Mucosa of descending colon (tissue), 3 donors: ENCODE measurements at regions of chr1 and their contacts with region 1.

Region 1: GRCh38 chr1:117121776-117122697 is 488 bp upstream of the TRIM45 start:
- DNase-seq: peak; percentile 95 to 98 (median 97)
- ATAC-seq: peak; percentile 97
- H3K4me3 ChIP-seq: peak overlapping the region; percentile 36
- H3K4me1 ChIP-seq: no peaks in the 10 kb centered on the region
- CTCF ChIP-seq: peak; percentile 79

Region 2: DNA sequence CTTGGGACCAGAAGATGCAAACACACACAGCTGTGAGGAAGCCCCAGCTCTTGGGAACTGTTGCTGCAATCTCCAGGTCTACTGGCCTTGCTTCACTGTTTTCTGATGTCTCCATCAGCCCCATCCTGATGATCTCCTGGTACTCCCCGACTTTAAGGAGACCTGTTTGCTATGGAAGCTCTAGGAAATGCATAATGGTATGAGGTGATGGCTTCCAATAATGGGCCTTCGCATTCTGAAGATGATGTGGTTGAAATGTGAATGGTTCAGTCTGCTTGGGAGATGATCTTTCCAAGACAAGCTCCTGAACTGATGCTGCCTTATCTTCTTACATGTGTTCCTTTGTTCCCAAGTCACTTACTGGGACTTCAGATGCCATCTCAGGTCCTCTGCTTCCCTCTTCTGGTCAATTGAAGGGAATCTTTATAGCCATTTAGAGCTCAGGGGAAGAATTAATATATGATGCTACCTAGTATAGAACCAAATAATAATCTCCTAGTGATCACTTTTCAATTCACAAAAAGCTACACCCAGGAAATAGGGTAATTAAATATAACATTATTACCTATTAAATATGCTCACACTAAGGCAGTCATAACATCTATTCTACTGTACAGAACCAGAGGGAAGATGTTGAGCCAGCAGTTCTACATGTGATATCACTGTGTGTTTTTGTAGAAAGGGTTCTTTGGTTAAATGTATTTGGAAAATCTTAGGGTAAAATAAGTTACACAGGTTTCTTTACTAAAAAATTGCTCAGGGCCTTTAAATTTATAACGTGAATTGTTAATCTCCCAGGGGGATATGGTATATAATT is 162.6 kb after region 1 on chr1:
- intact Hi-C with region 1: loop called in 1 of 2 experiments (anchors 10 kb)
- DNase-seq: peak in 1 of 3 donors; percentile 11
- ATAC-seq: peak; percentile 75
- H3K4me3 ChIP-seq: no peak overlapping the region
- H3K4me1 ChIP-seq: no peaks in the 10 kb centered on the region
- CTCF ChIP-seq: peak; percentile 15